IMR-90 (cell line): ENCODE measurements at regions of chr19 and their contacts with region 1.

Region 1: GRCh38 chr19:32475141-32476031 is 69.8 kb downstream of the DPY19L3 start:
- DNase-seq: no peak
- ATAC-seq: no peak
- H3K4me3 ChIP-seq: no peak overlapping the region
- H3K27ac ChIP-seq: no peak overlapping the region
- H3K4me1 ChIP-seq: no peaks in the 10 kb centered on the region
- H3K27me3 ChIP-seq: no peaks in the 10 kb centered on the region
- CTCF ChIP-seq: no peak
- POLR2A ChIP-seq: no peak
- RAD21 ChIP-seq: no peak

Region 2: GRCh38 chr19:32453736-32454135 is 21.6 kb before region 1 on chr19:
- CTCF ChIA-PET with region 1: no interaction called
- POLR2A ChIA-PET with region 1: no interaction called
- dilution Hi-C with region 1: no loop called
- in situ Hi-C with region 1: no loop called
- intact Hi-C with region 1: no loop called
- DNase-seq: peak; percentile 54
- ATAC-seq: no peak
- H3K4me3 ChIP-seq: no peak overlapping the region
- H3K27ac ChIP-seq: no peak overlapping the region
- H3K4me1 ChIP-seq: peaks cover 1% of the 10 kb centered on the region; the same call in 1 of the 2 replicates
- H3K27me3 ChIP-seq: no peaks in the 10 kb centered on the region
- CTCF ChIP-seq: no peak
- POLR2A ChIP-seq: no peak
- RAD21 ChIP-seq: no peak

Region 3: DNA sequence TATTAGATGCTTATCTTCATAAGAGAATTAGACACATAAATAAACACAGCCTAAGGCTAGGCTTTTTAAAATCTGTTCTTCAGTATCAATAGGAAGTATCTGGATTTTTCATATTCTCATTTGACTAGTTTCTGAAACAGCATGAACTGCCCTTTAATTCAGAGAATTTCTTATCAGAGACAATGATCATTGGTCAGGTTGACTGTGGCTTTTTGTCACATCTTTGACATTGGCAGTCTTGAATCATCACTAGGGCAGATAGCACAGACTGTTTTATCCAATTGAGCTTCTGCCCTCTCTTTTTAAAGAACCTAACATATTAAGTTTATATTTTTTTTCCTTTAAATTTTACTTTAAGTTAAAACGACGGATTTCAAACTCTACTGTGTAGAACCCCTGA is 10.2 kb before region 1 on chr19:
- CTCF ChIA-PET with region 1: interaction called, 3 read pairs
- POLR2A ChIA-PET with region 1: interaction called, 12 read pairs
- dilution Hi-C with region 1: no loop called
- in situ Hi-C with region 1: no loop called
- intact Hi-C with region 1: no loop called
- DNase-seq: no peak
- ATAC-seq: no peak
- H3K4me3 ChIP-seq: no peak overlapping the region
- H3K27ac ChIP-seq: no peak overlapping the region
- H3K4me1 ChIP-seq: no peaks in the 10 kb centered on the region
- H3K27me3 ChIP-seq: no peaks in the 10 kb centered on the region
- CTCF ChIP-seq: no peak
- POLR2A ChIP-seq: no peak
- RAD21 ChIP-seq: no peak

Region 4: DNA sequence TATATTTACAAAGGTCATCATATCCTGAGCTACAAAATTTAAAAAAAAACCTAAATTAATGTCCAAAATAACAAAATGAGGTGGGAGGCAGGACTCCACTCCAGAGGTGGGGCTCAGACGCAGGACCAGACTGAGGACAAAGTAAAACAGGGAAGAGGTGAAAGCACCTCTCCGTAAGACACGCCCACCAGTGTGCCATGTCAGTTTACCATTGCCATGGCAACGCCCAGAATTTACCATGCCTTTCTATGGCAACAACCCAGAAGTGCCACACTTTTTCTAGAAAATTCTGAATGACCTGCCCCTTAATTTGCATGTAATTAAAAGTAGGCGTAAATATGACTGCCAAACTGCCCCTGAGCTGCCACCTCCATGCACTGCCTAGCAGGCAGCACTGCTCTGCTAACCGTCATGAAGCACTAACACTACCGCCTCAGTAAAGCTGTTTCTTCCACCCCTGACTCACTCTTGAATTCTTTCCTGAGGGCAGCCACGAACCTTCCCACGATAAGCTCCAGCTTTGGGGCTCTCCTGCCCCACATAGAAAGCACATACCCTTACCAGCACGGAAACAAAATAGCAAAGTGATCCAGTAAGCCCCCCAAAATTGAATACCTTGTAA is 83.3 kb after region 1 on chr19:
- CTCF ChIA-PET with region 1: no interaction called
- POLR2A ChIA-PET with region 1: no interaction called
- dilution Hi-C with region 1: no loop called
- in situ Hi-C with region 1: no loop called
- intact Hi-C with region 1: no loop called
- DNase-seq: no peak
- ATAC-seq: no peak
- H3K4me3 ChIP-seq: no peak overlapping the region
- H3K27ac ChIP-seq: no peak overlapping the region
- H3K4me1 ChIP-seq: no peaks in the 10 kb centered on the region
- H3K27me3 ChIP-seq: no peaks in the 10 kb centered on the region; the same call in none of the 2 replicates
- CTCF ChIP-seq: no peak
- POLR2A ChIP-seq: no peak
- RAD21 ChIP-seq: no peak